ENCODE measurements at regions of chr10 and their contacts with region 1.

Region 1: GRCh38 chr10:12214763-12215218 is 18.8 kb downstream of the CDC123 start:
- DNase-seq: peak; percentile 78 to 87 (median 81)
- H3K4me3 ChIP-seq: peak overlapping the region in 2 of 7 experiments; percentile 30 to 65
- H3K27ac ChIP-seq: peak overlapping the region; percentile 10 to 19
- H3K4me1 ChIP-seq: peaks cover 0 to 9% (median 2%) of the 10 kb centered on the region in 4 experiments
- H3K27me3 ChIP-seq: no peaks in the 10 kb centered on the region

Region 2: GRCh38 chr10:12121673-12122072 is 93.1 kb before region 1 on chr10:
- CTCF ChIA-PET with region 1: no interaction called
- POLR2A ChIA-PET with region 1: no interaction called
- DNase-seq: no peak
- H3K4me3 ChIP-seq: no peak overlapping the region
- H3K27ac ChIP-seq: no peak overlapping the region
- H3K4me1 ChIP-seq: no peaks in the 10 kb centered on the region
- H3K27me3 ChIP-seq: no peaks in the 10 kb centered on the region

Region 3: GRCh38 chr10:12195603-12196506 is 18.9 kb before region 1 on chr10 and contains the starts of genes CDC123 and NUDT5:
- CTCF ChIA-PET with region 1: interaction called, 27 read pairs
- POLR2A ChIA-PET with region 1: interaction called, 3 read pairs
- DNase-seq: peak; percentile 88 to 95 (median 93)
- H3K4me3 ChIP-seq: peak within 1 kb of the TSS; percentile 66 to 100 (median 96)
- H3K27ac ChIP-seq: peak within 1 kb of the TSS; percentile 94 to 96
- H3K4me1 ChIP-seq: peaks cover 14 to 46% (median 29%) of the 10 kb centered on the region in 4 experiments
- H3K27me3 ChIP-seq: no peaks in the 10 kb centered on the region

Region 4: DNA sequence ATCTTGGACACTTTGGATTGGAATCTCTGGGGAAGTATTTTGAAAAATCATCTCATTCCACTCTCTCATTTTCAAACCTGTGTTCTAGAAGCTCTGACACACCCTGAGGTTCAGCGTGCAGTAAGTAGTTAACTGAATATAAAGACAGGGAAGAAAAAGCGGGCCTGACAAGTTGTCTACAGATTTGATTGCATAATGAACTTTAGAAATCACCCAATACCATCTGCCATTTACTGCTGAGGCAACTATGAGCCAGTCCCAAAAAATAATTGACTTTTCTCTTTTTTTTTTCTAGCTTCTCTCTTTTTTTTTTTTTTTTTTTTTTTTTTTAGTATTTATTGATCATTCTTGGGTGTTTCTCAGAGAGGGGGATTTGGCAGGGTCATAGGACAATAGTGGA is 10.7 kb after region 1 on chr10:
- CTCF ChIA-PET with region 1: interaction called, 16 read pairs
- POLR2A ChIA-PET with region 1: no interaction called
- DNase-seq: no peak
- H3K4me3 ChIP-seq: no peak overlapping the region
- H3K27ac ChIP-seq: no peak overlapping the region
- H3K4me1 ChIP-seq: peaks cover 0 to 9% (median 3%) of the 10 kb centered on the region in 4 experiments
- H3K27me3 ChIP-seq: no peaks in the 10 kb centered on the region

Region 5: DNA sequence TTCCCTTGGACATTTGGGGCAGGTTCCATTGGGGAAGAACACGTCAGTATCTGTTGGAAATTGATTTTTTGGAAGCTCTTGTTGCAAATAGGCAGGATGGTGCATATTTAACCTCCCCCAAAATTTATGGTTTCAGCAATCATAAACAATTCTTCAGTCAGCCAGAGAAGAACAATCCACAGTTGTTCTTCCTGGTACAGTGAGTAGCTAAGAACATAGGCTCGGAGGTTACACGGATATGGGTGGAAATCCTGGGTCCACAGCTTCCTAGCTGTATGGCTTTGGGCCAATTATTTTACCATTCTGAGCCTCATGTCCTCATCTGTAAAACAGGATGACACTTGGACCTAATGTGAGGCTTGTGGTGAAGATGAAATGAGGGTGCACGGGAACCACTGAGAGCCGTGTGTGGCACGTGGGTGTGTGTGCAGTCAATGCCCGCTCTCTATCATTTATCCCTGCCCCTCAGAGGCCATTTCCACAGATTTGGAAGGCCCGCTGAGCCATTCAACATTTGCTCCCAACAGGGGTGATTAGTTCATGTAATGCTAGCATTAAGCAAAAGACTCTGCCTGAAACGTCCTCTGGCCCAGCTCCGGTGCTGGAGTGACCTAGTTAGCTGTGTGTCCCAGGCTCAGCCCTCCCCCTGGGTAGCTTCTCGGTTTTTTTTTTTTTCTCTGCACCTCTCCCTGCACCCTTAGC is 144.2 kb after region 1 on chr10:
- CTCF ChIA-PET with region 1: no interaction called
- POLR2A ChIA-PET with region 1: no interaction called
- DNase-seq: no peak
- H3K4me3 ChIP-seq: no peak overlapping the region
- H3K27ac ChIP-seq: no peak overlapping the region
- H3K4me1 ChIP-seq: peaks cover under 1 to 9% (median 4%) of the 10 kb centered on the region in 4 experiments
- H3K27me3 ChIP-seq: no peaks in the 10 kb centered on the region

Region 6: GRCh38 chr10:12656518-12657142 is 441.8 kb after region 1 on chr10:
- CTCF ChIA-PET with region 1: interaction called, 14 read pairs
- POLR2A ChIA-PET with region 1: interaction called, 3 read pairs
- DNase-seq: peak; percentile 66 to 84 (median 83)
- H3K4me3 ChIP-seq: no peak overlapping the region
- H3K27ac ChIP-seq: no peak overlapping the region
- H3K4me1 ChIP-seq: no peaks in the 10 kb centered on the region
- H3K27me3 ChIP-seq: no peaks in the 10 kb centered on the region

Region 7: GRCh38 chr10:12710594-12711349 is 496.0 kb after region 1 on chr10:
- CTCF ChIA-PET with region 1: interaction called, 10 read pairs
- POLR2A ChIA-PET with region 1: no interaction called
- DNase-seq: peak; percentile 65 to 85 (median 79)
- H3K4me3 ChIP-seq: no peak overlapping the region
- H3K27ac ChIP-seq: no peak overlapping the region
- H3K4me1 ChIP-seq: peaks cover 3 to 22% (median 11%) of the 10 kb centered on the region in 4 experiments
- H3K27me3 ChIP-seq: no peaks in the 10 kb centered on the region

Measured in common myeloid progenitor, CD34-positive (primary cell).